GM12878 (cell line): ENCODE measurements at regions of chr16 and their contacts with region 1.

Region 1: DNA sequence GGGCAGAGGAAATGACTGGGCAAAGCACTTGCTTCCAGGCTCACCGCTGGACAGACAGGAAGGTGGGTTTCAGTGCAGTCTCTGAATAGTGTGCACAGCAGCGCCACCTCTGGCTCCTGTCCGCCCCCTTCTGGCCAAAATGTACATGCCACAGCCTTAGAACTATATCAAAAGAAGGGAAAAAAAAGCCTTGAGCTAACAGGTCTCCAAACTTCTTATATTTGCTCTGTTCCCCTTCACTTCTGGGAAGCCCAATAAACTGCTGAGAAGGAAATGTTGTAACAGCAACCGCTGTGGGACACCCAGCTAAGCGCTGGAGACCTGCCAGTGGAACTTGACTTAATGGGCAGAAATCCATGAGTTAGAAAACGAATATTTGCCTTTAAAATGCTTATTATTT is 17.5 kb downstream of the COG7 start:
- DNase-seq: peak; percentile 15
- ATAC-seq: peak; percentile 100
- H3K4me3 ChIP-seq: no peak overlapping the region
- H3K27ac ChIP-seq: no peak overlapping the region
- H3K4me1 ChIP-seq: no peaks in the 10 kb centered on the region
- H3K27me3 ChIP-seq: no peaks in the 10 kb centered on the region
- CTCF ChIP-seq: peak; percentile 89 to 93 (median 91)
- EP300 ChIP-seq: no peak
- POLR2A ChIP-seq: no peak
- RAD21 ChIP-seq: peak; percentile 72

Region 2: DNA sequence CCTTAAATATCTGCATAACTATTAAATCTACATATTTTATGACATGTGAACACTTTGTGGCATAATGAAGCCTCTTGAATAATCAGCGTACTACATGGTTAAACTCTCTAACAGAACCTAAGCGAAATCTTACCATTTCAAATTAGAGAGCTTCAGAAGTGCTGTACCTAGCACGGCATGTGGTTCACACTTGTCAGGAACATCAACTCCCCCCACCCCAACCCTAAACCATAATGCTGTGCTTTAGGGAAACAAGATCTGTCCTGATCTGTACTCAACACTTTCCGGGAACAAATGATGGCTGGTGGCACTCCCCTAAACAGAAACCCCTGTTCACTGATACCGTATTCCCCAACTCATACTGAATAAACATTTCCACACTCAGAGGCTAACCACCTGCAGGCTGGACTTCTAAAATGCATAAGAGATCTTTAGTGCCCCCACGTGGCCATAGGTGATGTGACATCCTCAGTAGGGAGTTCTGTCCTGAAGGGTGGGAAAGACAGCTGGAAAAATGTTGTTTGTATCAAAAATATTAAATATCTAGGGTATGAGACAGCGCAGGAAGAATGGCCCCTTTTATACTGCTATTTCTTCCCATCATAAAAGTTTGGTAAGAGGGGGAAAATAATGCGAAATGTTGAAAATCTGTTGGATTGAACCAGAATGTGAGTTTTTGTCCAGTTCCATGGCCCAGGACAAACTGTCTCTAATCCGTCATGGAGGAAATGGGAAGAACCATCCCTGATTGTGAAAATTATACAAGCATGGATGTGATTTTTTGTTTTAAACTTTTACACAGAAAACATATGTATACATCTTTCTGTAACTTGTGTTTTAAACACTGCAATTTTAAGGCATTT is 374.8 kb before region 1 on chr16:
- CTCF ChIA-PET with region 1: interaction called, 15 read pairs
- POLR2A ChIA-PET with region 1: no interaction called
- RAD21 ChIA-PET with region 1: interaction called, 3 read pairs
- SMC1A ChIA-PET with region 1: interaction called, 8 read pairs
- in situ Hi-C with region 1: no loop called
- intact Hi-C with region 1: loop called (anchors 1 kb)
- DNase-seq: peak; percentile 7
- ATAC-seq: peak; percentile 91
- H3K4me3 ChIP-seq: no peak overlapping the region
- H3K27ac ChIP-seq: no peak overlapping the region
- H3K4me1 ChIP-seq: no peaks in the 10 kb centered on the region
- H3K27me3 ChIP-seq: no peaks in the 10 kb centered on the region
- CTCF ChIP-seq: peak; percentile 78 to 83 (median 79)
- EP300 ChIP-seq: no peak
- POLR2A ChIP-seq: no peak
- RAD21 ChIP-seq: peak; percentile 79

Region 3: GRCh38 chr16:23188914-23189313 is 246.6 kb before region 1 on chr16:
- CTCF ChIA-PET with region 1: interaction called, 470 read pairs
- POLR2A ChIA-PET with region 1: no interaction called
- RAD21 ChIA-PET with region 1: interaction called, 159 read pairs
- SMC1A ChIA-PET with region 1: interaction called, 189 read pairs
- in situ Hi-C with region 1: no loop called
- intact Hi-C with region 1: no loop called
- DNase-seq: no peak
- ATAC-seq: no peak
- H3K4me3 ChIP-seq: no peak overlapping the region
- H3K27ac ChIP-seq: no peak overlapping the region
- H3K4me1 ChIP-seq: no peaks in the 10 kb centered on the region
- H3K27me3 ChIP-seq: no peaks in the 10 kb centered on the region; a peak in 1 of 4 replicates
- CTCF ChIP-seq: no peak
- EP300 ChIP-seq: no peak
- POLR2A ChIP-seq: no peak
- RAD21 ChIP-seq: no peak

Region 4: DNA sequence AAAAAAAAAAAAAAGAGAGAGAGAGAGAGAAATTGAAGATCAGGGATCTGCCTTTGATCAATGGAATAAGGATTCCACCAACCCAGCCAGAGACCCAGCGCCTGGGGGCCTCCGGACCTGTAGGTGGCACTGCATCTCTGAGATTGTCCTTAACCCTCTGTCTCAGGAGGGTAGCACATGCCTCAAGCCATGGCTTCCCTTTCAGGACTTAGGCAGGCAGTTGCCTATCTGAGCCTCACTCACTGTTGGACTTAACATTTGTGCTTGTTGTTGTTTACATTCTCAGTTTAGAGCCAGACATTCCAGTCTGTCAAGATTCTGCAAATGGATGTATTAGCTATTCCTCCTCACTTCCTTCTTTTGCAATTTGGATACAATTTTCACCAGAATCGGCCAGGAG is 138.5 kb before region 1 on chr16:
- CTCF ChIA-PET with region 1: interaction called, 83 read pairs
- POLR2A ChIA-PET with region 1: no interaction called
- RAD21 ChIA-PET with region 1: interaction called, 24 read pairs
- SMC1A ChIA-PET with region 1: interaction called, 59 read pairs
- in situ Hi-C with region 1: no loop called
- intact Hi-C with region 1: loop called (anchors 2 kb)
- DNase-seq: no peak
- ATAC-seq: peak; percentile 77
- H3K4me3 ChIP-seq: no peak overlapping the region
- H3K27ac ChIP-seq: no peak overlapping the region
- H3K4me1 ChIP-seq: peaks cover 7% of the 10 kb centered on the region; the same call in 1 of the 2 replicates
- H3K27me3 ChIP-seq: peaks cover 0 to 3% of the 10 kb centered on the region in 2 experiments; a peak in 2 of 4 replicates
- CTCF ChIP-seq: peak; percentile 32 to 48 (median 37); a peak in 4 of 6 replicates
- EP300 ChIP-seq: no peak
- POLR2A ChIP-seq: no peak
- RAD21 ChIP-seq: peak; percentile 63

Region 5: DNA sequence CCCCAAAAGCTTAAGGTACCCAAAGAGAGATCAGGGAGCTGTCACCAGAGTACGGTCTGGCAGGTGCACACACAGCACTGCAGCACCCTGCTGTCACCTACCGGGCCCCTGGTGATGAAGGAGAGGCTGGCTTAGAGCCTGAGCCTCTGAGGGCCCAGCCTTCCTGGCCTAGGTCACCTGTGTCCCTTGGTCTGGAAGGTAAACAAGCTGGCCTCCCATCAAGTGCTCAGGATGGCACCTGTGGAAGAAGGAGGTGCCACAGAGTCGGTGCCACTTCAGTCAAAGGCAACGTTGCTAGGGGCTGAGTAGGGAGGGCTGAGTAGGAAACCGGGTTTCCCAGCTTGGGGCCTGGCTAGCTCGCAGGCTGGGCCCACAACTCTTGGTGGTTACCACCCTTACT is 53.2 kb before region 1 on chr16:
- CTCF ChIA-PET with region 1: interaction called, 13 read pairs
- POLR2A ChIA-PET with region 1: no interaction called
- RAD21 ChIA-PET with region 1: interaction called, 4 read pairs
- SMC1A ChIA-PET with region 1: no interaction called
- in situ Hi-C with region 1: no loop called
- intact Hi-C with region 1: no loop called
- DNase-seq: no peak
- ATAC-seq: no peak
- H3K4me3 ChIP-seq: no peak overlapping the region
- H3K27ac ChIP-seq: no peak overlapping the region
- H3K4me1 ChIP-seq: no peaks in the 10 kb centered on the region
- H3K27me3 ChIP-seq: no peaks in the 10 kb centered on the region; a peak in 1 of 4 replicates
- CTCF ChIP-seq: no peak
- EP300 ChIP-seq: no peak
- POLR2A ChIP-seq: no peak
- RAD21 ChIP-seq: no peak

Region 6: DNA sequence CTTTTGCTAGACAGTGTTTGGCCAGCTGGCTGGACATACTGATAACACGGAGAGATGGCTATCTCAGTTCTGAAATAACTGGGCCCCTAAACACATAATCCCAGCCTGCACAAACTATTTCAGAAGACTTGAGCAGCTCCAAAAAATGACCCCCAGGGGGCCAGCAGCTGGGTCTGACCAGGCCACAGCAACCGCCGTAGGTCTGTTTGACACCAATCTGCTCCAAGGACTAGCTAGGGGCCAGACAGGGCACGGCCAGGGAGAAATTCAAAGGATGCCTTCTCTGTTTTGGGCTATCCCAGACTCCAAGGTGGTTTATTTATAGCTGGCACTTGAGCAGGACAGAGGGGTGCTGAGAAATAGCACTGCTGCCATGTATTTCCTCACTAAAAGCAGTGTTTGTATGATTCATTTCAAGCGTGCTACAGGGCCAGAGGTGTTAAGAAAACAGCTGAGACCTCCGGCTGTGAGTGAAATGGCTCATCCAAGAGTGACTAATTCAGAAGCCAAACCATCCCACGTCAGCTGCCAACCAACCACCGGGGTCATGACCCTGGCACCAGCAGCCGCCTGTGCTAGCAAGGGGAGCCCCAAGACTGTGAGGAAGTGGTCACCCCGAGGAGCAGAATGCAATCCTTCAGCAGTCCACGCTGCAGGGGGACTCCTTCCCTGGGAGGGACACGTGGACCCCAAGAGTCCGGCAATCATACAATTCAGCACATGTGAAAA is 69.1 kb after region 1 on chr16:
- CTCF ChIA-PET with region 1: interaction called, 50 read pairs
- POLR2A ChIA-PET with region 1: interaction called, 4 read pairs
- RAD21 ChIA-PET with region 1: interaction called, 48 read pairs
- SMC1A ChIA-PET with region 1: interaction called, 61 read pairs
- in situ Hi-C with region 1: no loop called
- intact Hi-C with region 1: no loop called
- DNase-seq: peak; percentile 77
- ATAC-seq: peak; percentile 76
- H3K4me3 ChIP-seq: peak overlapping the region; percentile 68
- H3K27ac ChIP-seq: peak overlapping the region; percentile 86
- H3K4me1 ChIP-seq: peaks cover 48% of the 10 kb centered on the region
- H3K27me3 ChIP-seq: no peaks in the 10 kb centered on the region
- CTCF ChIP-seq: 0 out of 6 replicates have a peak, but pooled peaks of 1 of the 3 experiments have one; percentile 23
- EP300 ChIP-seq: peak; percentile 73 to 86; a peak in 3 of 4 replicates
- POLR2A ChIP-seq: peak; percentile 31; the same call in 1 of the 2 replicates
- RAD21 ChIP-seq: no peak

Region 7: DNA sequence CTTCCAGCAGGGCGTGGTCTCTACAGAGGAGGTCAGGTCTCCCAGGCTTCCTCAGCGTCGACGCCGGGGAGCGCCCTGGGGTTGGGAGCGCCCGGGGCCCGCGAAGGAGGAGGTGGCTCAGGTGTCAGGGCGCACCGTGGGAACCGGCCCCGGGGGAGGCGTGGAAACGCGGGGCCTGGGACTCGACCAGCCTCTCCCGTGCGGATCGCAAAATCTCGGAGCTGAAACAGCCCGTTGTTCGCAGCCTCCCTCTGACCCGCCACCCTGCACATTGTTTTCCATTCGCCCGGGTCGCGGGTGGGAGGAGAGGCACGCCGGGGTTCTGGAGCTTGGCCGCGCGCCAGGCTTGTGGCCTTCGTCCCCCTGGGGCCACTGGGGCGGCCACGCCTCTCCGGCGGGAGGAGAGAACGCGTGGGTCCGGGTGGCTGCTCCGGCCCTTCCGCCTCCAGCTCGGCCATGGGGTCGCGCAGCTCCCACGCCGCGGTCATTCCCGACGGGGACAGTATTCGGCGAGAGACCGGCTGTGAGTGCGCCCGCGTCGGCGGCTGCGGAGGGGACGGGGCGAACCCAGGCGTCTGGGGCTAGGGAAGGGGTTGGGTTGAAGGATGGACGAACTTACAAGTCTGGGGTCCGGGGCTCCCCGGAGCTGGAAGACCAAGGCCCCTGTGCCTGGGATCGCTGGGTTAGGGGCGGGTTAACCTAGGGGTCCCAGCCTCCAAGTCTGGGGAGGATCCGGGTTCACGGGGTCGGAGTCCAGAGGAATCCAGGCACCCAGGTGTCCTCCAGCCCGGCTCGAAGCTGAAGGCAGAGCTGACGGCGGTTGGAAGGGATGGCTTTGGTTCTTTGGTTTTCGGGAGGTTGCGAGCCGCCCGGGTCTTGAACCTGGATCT is 319.3 kb after region 1 on chr16 and contains the start of gene CHP2:
- CTCF ChIA-PET with region 1: no interaction called
- POLR2A ChIA-PET with region 1: no interaction called
- RAD21 ChIA-PET with region 1: no interaction called
- SMC1A ChIA-PET with region 1: no interaction called
- in situ Hi-C with region 1: no loop called
- intact Hi-C with region 1: no loop called
- DNase-seq: no peak
- ATAC-seq: no peak
- H3K4me3 ChIP-seq: no peak within 1 kb of the TSS
- H3K27ac ChIP-seq: no peak within 1 kb of the TSS
- H3K4me1 ChIP-seq: no peaks in the 10 kb centered on the region
- H3K27me3 ChIP-seq: peaks cover 0 to 10% of the 10 kb centered on the region in 2 experiments
- CTCF ChIP-seq: no peak
- EP300 ChIP-seq: no peak
- POLR2A ChIP-seq: no peak
- RAD21 ChIP-seq: no peak
- polyA plus RNA-seq, gene CHP2: not detected